ENCODE measurements at regions of chr15 and their contacts with region 1.

Region 1: DNA sequence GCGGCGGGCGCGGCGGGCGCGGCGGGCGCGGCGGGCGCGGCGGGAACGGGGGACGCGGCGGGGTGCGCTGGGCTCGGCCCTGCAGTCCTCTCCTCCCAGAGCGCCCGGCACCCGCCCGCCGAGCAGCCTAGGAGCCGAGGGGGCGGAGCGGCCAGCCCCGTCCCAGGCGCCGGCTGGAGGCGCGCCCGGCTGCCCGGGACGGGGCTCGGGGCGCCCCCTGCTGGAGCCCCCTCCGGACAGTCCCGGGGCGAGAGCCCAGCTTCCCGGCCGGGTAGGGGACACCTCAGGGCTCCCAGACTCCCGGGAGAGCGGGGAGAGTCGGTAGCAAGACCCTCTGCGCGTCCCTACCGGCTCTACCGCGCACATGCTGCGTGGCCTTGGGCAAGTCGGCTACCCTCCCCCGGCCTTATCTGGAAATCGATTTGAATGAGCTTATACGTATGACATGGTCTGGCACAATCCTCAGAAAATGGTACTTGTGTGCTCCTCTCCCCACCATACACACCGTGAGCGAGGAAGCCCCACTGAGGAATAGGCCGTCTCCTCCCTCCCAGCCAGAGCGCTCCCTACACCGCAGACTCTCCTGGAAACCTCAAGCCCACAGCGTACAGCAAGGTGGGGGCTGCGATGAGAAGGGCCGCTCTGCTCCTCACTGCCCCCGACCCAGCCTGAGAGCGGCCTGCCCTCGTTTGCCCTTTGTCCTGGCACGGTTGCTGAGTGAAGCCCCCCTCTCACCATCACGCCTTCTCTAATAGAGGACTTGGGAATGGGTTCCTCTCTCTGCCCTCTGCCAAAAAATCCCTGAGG is at the start of gene DAPK2:
- DNase-seq: peak; percentile 69
- H3K4me3 Mint-ChIP-seq: peak within 1 kb of the TSS; percentile 63
- H3K27ac Mint-ChIP-seq: no peak within 1 kb of the TSS
- H3K4me1 Mint-ChIP-seq: peaks cover 6% of the 10 kb centered on the region
- H3K27me3 Mint-ChIP-seq: peaks cover 11% of the 10 kb centered on the region
- total RNA-seq, gene DAPK2: 3.2 to 3.7 TPM

Region 2: GRCh38 chr15:63610200-63610841 is 436.2 kb before region 1 on chr15:
- CTCF ChIA-PET with region 1: interaction called, 29 read pairs
- POLR2A ChIA-PET with region 1: interaction called, 4 read pairs
- DNase-seq: peak; percentile 86
- H3K4me3 Mint-ChIP-seq: no peak overlapping the region
- H3K27ac Mint-ChIP-seq: peak overlapping the region; percentile 86
- H3K4me1 Mint-ChIP-seq: peaks cover 49% of the 10 kb centered on the region
- H3K27me3 Mint-ChIP-seq: no peaks in the 10 kb centered on the region

Region 3: DNA sequence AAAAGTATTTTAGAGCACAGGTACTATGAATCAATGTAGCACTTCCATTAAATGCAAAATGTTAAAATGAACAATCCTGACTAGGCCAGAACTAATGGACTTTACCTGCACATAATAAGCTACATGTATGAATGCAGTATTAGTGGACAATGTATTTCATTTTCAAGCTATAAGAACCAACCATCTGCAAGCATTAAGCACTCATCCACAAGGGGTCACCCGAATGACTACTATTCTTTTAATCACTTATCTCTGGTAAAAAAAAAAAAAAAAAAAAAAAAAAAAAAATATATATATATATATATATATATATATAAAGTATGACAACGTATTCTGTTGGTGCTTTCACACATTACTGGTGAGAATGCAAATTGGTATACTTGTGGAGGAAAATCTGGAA is 220.0 kb before region 1 on chr15:
- CTCF ChIA-PET with region 1: interaction called, 11 read pairs
- POLR2A ChIA-PET with region 1: no interaction called
- DNase-seq: no peak
- H3K4me3 Mint-ChIP-seq: no peak overlapping the region
- H3K27ac Mint-ChIP-seq: no peak overlapping the region
- H3K4me1 Mint-ChIP-seq: peaks cover 39% of the 10 kb centered on the region
- H3K27me3 Mint-ChIP-seq: no peaks in the 10 kb centered on the region

Region 4: DNA sequence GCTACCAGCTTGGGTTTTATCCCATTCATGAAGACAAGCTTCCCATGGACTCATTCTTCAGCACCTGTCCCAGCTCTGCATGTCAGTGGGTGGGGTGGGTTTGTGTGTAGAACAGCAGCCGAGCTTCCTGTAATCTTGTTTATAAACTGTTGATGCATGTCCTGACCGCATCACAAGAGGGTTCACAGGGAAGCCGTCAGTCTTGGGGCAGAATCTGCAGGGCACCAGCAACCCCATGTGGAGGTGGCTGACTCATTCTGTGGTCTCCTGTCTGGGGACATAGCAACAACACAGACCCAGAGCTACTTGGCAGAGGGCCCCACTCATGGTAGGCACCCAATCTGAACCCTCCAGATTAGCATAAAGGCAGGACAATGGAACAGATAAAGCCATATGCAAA is 35.8 kb before region 1 on chr15:
- CTCF ChIA-PET with region 1: interaction called, 30 read pairs
- POLR2A ChIA-PET with region 1: interaction called, 11 read pairs
- DNase-seq: peak; percentile 92
- H3K4me3 Mint-ChIP-seq: peak overlapping the region; percentile 42
- H3K27ac Mint-ChIP-seq: peak overlapping the region; percentile 86
- H3K4me1 Mint-ChIP-seq: peaks cover 58% of the 10 kb centered on the region
- H3K27me3 Mint-ChIP-seq: no peaks in the 10 kb centered on the region

Region 5: DNA sequence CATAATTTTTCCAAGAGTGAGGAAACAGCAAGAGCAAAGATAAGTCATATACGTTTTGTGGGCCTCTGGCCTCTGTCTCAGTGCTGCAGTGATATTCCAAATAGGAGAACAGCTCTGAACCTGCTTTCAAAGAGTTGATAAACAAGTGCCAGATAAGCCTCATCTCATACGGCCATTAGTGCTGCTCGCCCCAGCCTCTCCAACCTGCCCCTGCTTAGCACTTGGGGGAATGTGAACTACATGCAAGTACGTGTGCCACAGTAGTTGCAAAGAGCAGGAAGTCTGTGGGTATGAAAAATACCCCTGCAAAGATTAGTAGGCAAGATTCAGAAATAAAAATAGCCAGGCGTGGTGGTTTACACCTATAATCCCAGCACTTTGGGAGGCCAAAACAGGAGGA is 14.2 kb before region 1 on chr15:
- CTCF ChIA-PET with region 1: interaction called, 14 read pairs
- POLR2A ChIA-PET with region 1: no interaction called
- DNase-seq: no peak
- H3K4me3 Mint-ChIP-seq: no peak overlapping the region
- H3K27ac Mint-ChIP-seq: no peak overlapping the region
- H3K4me1 Mint-ChIP-seq: peaks cover 12% of the 10 kb centered on the region
- H3K27me3 Mint-ChIP-seq: no peaks in the 10 kb centered on the region

Region 6: DNA sequence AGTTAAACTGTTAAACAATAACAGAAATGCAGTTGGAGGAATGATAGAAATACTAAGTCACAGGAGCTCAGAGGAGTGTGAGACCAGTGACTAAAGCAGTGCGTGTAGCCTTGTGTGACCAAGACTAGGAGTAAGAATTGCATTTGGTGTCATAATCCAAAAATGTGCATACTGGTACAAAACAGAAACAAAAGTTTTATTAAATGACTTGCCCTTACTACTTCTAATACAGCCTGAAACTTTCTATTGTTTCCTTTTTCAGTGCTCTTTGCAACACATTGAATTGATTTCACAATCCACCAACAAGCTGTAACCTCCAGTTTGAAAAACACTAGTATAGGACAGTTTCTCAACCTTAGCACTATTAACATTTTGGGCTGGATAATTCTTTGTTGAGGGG is 66.4 kb after region 1 on chr15:
- CTCF ChIA-PET with region 1: no interaction called
- POLR2A ChIA-PET with region 1: no interaction called
- DNase-seq: no peak
- H3K4me3 Mint-ChIP-seq: no peak overlapping the region
- H3K27ac Mint-ChIP-seq: peak overlapping the region; percentile 57
- H3K4me1 Mint-ChIP-seq: peaks cover 35% of the 10 kb centered on the region
- H3K27me3 Mint-ChIP-seq: no peaks in the 10 kb centered on the region

Region 7: DNA sequence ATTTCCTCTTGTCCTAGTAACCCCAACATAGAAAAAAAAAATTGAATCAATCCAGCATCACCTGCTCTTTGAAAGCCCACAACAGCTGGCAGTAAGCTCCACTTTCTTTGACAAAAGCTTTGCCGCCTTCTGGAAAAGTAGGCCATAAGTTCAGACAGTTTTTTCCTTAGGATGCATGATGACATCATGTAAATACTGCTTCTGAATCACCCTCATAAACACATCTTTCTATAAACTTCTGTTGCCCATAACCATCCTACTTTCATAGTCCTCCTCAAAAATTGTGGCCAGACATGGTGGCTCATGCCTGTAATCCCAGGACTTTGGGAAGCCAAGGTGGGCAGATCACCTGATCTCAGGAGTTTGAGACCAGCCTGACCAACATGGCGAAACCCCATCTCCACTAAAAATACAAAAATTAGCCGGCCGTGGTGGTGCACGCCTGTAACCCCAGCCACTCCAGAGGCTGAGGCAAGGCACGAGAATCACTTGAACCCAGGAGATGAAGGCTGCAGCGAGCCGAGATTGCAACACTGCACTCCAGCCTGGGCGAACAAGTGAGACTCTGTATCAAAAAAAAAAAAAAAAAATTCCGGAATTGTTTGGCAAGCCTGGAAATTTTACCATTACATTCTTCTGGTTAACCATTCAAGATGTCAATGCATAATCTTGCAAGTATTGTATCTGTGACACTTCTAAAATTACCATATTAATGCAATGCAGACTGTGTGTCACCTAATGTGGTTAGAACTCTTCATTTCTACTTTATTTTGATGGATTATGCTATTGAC is 242.3 kb after region 1 on chr15:
- CTCF ChIA-PET with region 1: no interaction called
- POLR2A ChIA-PET with region 1: no interaction called
- DNase-seq: no peak
- H3K4me3 Mint-ChIP-seq: no peak overlapping the region
- H3K27ac Mint-ChIP-seq: no peak overlapping the region
- H3K4me1 Mint-ChIP-seq: peaks cover 4% of the 10 kb centered on the region
- H3K27me3 Mint-ChIP-seq: no peaks in the 10 kb centered on the region

Measured in activated CD4-positive, alpha-beta memory T cell treated with anti-CD3 and anti-CD28 coated beads, Interleukin-2, amount 10 ng/mL, durations not matched to agents 7 days and 5 days (primary cell).